Posterior vena cava (tissue), 2 donors: ENCODE measurements at regions of chr6 and their contacts with region 1.

Region 1: GRCh38 chr6:121521892-121522664 is 86.6 kb downstream of the GJA1 start:
- DNase-seq: no peak

Region 2: GRCh38 chr6:120903836-120904235 is 618.2 kb before region 1 on chr6:
- intact Hi-C with region 1: no loop called
- DNase-seq: no peak

Region 3: GRCh38 chr6:121465101-121465500 is 57.0 kb before region 1 on chr6:
- intact Hi-C with region 1: loop called in 1 of 2 experiments (anchors 2 kb)
- DNase-seq: no peak